ENCODE measurements at regions of chr3 and their contacts with region 1.

Region 1: DNA sequence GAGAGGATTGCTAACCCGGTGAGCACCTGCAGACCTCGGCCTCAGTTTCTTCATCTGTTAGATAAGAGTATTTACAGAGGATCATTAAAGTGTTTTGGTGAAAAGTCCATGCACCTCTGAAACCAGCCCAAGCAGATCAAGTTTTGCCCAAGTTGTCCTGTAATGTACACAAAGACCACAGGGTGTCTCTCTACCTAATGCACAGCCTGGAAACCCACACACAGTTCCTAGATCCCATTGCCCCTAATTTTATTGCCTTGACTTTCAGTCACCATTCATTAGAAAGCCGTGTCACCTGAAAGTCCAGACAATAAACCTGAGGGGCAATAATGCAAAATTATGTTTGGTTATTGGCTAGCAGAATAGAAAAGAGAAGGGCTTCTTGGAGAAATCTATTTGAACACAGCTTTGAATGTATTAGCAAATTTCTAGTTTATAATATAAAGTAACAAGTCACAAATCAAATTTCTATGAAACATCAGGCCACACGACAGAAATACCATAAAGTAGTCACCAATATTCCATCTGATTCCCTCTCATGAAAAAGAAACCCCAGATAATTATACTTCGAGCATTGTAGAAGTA is 161.3 kb upstream of the SLC2A2 start:
- DNase-seq: peak in 1 of 2 experiments; percentile 50
- H3K4me3 ChIP-seq: no peak overlapping the region
- H3K27ac ChIP-seq: no peak overlapping the region
- H3K4me1 ChIP-seq: peaks cover 44% of the 10 kb centered on the region
- H3K27me3 ChIP-seq: no peaks in the 10 kb centered on the region
- CTCF ChIP-seq: peak; percentile 81

Region 2: DNA sequence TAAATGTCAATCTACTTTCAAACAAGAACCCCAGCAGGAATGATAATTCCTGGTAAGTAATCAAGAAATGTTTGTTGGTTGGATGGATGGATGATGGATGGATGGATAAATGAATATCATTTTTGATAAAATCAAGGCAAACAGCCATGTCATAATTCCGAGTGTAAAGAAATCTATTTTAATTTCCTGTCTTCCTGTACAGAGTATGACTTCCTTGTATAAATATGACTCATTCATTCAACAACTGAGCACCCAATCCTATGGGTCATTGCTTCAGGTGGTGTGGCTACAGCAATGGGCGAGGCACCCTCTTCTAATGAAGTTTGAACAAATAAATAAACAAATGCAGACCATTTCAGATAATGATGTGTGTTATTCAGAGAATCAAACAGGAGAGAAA is 73.6 kb after region 1 on chr3:
- CTCF ChIA-PET with region 1: interaction called, 3 read pairs
- POLR2A ChIA-PET with region 1: no interaction called
- intact Hi-C with region 1: loop called (anchors 2 kb)
- DNase-seq: peak; percentile 45 to 96
- H3K4me3 ChIP-seq: peak overlapping the region; percentile 35; the same call in 1 of the 2 replicates
- H3K27ac ChIP-seq: peak overlapping the region; percentile 90
- H3K4me1 ChIP-seq: peaks cover 54% of the 10 kb centered on the region
- H3K27me3 ChIP-seq: no peaks in the 10 kb centered on the region
- CTCF ChIP-seq: no peak

Measured in PC-9 (cell line).